ENCODE measurements at regions of chr12 and their contacts with region 1.

Region 1: GRCh38 chr12:50174971-50175715 is 8.0 kb upstream of the CERS5 start:
- DNase-seq: peak; percentile 51 to 82 (median 54)
- ATAC-seq: peak; percentile 64
- H3K4me3 ChIP-seq: no peak overlapping the region
- H3K27ac ChIP-seq: no peak overlapping the region
- H3K4me1 ChIP-seq: no peaks in the 10 kb centered on the region
- H3K27me3 ChIP-seq: no peaks in the 10 kb centered on the region
- CTCF ChIP-seq: peak; percentile 52 to 87 (median 54); a peak in 5 of 6 replicates
- EP300 ChIP-seq: no peak
- POLR2A ChIP-seq: no peak
- RAD21 ChIP-seq: peak; percentile 92 to 94

Region 2: GRCh38 chr12:50132505-50133135 is 42.5 kb before region 1 on chr12:
- CTCF ChIA-PET with region 1: interaction called, 7 read pairs
- POLR2A ChIA-PET with region 1: interaction called, 3 read pairs
- in situ Hi-C with region 1: no loop called
- intact Hi-C with region 1: loop called (anchors 2 kb)
- DNase-seq: peak in 1 of 4 experiments; percentile 23
- ATAC-seq: peak; percentile 60; the same call in 1 of the 3 replicates
- H3K4me3 ChIP-seq: no peak overlapping the region
- H3K27ac ChIP-seq: no peak overlapping the region
- H3K4me1 ChIP-seq: no peaks in the 10 kb centered on the region
- H3K27me3 ChIP-seq: no peaks in the 10 kb centered on the region
- CTCF ChIP-seq: peak; percentile 27 to 45 (median 33); a peak in 3 of 6 replicates
- EP300 ChIP-seq: no peak
- POLR2A ChIP-seq: no peak
- RAD21 ChIP-seq: peak in 1 of 2 experiments; percentile 50; a peak in 2 of 4 replicates